CD4-positive, alpha-beta memory T cell (primary cell): ENCODE measurements at regions of chr9 and their contacts with region 1.

Region 1: GRCh38 chr9:131407717-131408195 is 13.9 kb downstream of the PRRC2B start:
- DNase-seq: peak; percentile 54 to 68 (median 59)
- H3K4me3 ChIP-seq: peak overlapping the region in 1 of 2 donors; percentile 6
- H3K4me3 Mint-ChIP-seq: peak overlapping the region; percentile 72 to 89 (median 82)
- H3K27ac ChIP-seq: peak overlapping the region; percentile 46
- H3K27ac Mint-ChIP-seq: peak overlapping the region; percentile 62 to 92 (median 88)
- H3K4me1 ChIP-seq: peaks cover 95% of the 10 kb centered on the region
- H3K4me1 Mint-ChIP-seq: peaks cover 70 to 92% (median 80%) of the 10 kb centered on the region in 4 donors
- H3K27me3 ChIP-seq: no peaks in the 10 kb centered on the region
- H3K27me3 Mint-ChIP-seq: no peaks in the 10 kb centered on the region

Region 2: GRCh38 chr9:131277910-131278701 is 129.7 kb before region 1 on chr9:
- CTCF ChIA-PET with region 1: no interaction called
- POLR2A ChIA-PET with region 1: no interaction called
- intact Hi-C with region 1: no loop called
- DNase-seq: peak; percentile 60 to 78 (median 61)
- H3K4me3 ChIP-seq: peak overlapping the region; percentile 21 to 65
- H3K4me3 Mint-ChIP-seq: peak overlapping the region; percentile 84 to 93 (median 91)
- H3K27ac ChIP-seq: peak overlapping the region; percentile 79
- H3K27ac Mint-ChIP-seq: peak overlapping the region; percentile 92 to 95 (median 94)
- H3K4me1 ChIP-seq: peaks cover 27% of the 10 kb centered on the region
- H3K4me1 Mint-ChIP-seq: peaks cover 22 to 49% (median 25%) of the 10 kb centered on the region in 4 donors
- H3K27me3 ChIP-seq: no peaks in the 10 kb centered on the region
- H3K27me3 Mint-ChIP-seq: peaks cover 2 to 3% of the 10 kb centered on the region in 2 donors

Region 3: GRCh38 chr9:131366761-131367401 is 40.9 kb before region 1 on chr9:
- CTCF ChIA-PET with region 1: interaction called, 10 read pairs
- POLR2A ChIA-PET with region 1: interaction called, 44 read pairs
- intact Hi-C with region 1: no loop called
- DNase-seq: no peak
- H3K4me3 ChIP-seq: no peak overlapping the region
- H3K4me3 Mint-ChIP-seq: no peak overlapping the region
- H3K27ac ChIP-seq: no peak overlapping the region
- H3K27ac Mint-ChIP-seq: no peak overlapping the region
- H3K4me1 ChIP-seq: peaks cover 1% of the 10 kb centered on the region
- H3K4me1 Mint-ChIP-seq: peaks cover 2 to 5% (median 3%) of the 10 kb centered on the region in 4 donors
- H3K27me3 ChIP-seq: no peaks in the 10 kb centered on the region
- H3K27me3 Mint-ChIP-seq: no peaks in the 10 kb centered on the region

Region 4: DNA sequence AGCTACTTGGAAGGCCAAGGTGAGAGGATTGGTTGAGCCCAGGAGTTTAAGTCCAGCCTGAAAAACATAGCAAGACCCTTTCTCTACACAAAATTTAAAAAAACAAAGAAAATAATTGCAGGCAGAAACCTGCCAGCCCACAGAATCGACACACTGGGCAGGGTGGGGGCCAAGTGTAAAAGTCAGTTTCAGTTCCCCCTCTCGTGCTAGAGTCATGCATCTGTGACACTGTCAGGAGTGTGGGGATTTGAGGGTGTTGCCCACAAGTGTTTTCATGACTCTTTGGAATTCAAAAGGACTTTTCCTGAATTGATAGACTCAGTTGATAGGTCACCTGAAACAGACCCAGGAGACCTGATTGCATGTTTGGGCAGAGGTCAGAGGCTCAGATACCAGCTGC is 33.7 kb after region 1 on chr9:
- CTCF ChIA-PET with region 1: no interaction called
- POLR2A ChIA-PET with region 1: no interaction called
- intact Hi-C with region 1: no loop called
- DNase-seq: no peak
- H3K4me3 ChIP-seq: no peak overlapping the region
- H3K4me3 Mint-ChIP-seq: no peak overlapping the region
- H3K27ac ChIP-seq: no peak overlapping the region
- H3K27ac Mint-ChIP-seq: peak overlapping the region in 5 of 7 donors; percentile 37 to 68 (median 52)
- H3K4me1 ChIP-seq: no peaks in the 10 kb centered on the region
- H3K4me1 Mint-ChIP-seq: peaks cover 0 to 17% (median 5%) of the 10 kb centered on the region in 4 donors
- H3K27me3 ChIP-seq: no peaks in the 10 kb centered on the region
- H3K27me3 Mint-ChIP-seq: no peaks in the 10 kb centered on the region

Region 5: DNA sequence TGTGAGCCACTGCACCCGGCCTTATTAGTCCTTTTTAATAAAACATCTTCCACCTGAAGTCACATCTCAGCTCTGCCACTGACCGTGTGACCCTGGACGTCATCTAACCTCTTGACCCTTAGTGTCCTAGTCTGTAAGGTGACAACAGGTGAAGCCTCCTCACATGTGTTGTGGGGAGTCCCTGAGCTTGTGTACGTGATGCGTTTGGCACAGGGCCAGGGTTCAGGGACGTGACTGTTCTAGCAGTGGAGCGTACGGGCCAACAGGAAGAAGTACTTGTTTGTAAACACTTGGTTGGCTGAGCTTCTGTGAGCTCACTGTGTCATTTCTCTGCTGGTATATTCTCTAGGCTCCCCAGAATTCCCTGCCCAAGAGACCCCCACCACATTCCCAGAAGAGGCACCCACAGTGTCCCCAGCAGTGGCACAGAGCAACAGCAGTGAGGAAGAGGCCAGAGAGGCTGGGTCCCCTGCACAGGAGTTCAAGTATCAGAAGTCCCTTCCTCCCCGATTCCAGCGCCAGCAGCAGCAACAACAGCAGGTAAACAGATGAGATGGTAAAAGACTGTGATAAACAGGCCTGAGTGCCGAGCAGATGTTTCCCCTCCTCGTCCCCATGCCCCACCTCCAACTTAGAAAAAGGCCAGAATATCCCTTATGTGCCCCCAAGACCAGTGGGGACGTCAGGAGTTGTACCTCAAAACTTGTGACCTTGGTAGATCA is 59.6 kb after region 1 on chr9:
- CTCF ChIA-PET with region 1: no interaction called
- POLR2A ChIA-PET with region 1: no interaction called
- intact Hi-C with region 1: no loop called
- DNase-seq: no peak
- H3K4me3 ChIP-seq: no peak overlapping the region
- H3K4me3 Mint-ChIP-seq: no peak overlapping the region
- H3K27ac ChIP-seq: no peak overlapping the region
- H3K27ac Mint-ChIP-seq: peak overlapping the region in 4 of 7 donors; percentile 8 to 68 (median 38)
- H3K4me1 ChIP-seq: no peaks in the 10 kb centered on the region
- H3K4me1 Mint-ChIP-seq: peaks cover 0 to 10% (median 4%) of the 10 kb centered on the region in 4 donors
- H3K27me3 ChIP-seq: no peaks in the 10 kb centered on the region
- H3K27me3 Mint-ChIP-seq: no peaks in the 10 kb centered on the region

Region 6: DNA sequence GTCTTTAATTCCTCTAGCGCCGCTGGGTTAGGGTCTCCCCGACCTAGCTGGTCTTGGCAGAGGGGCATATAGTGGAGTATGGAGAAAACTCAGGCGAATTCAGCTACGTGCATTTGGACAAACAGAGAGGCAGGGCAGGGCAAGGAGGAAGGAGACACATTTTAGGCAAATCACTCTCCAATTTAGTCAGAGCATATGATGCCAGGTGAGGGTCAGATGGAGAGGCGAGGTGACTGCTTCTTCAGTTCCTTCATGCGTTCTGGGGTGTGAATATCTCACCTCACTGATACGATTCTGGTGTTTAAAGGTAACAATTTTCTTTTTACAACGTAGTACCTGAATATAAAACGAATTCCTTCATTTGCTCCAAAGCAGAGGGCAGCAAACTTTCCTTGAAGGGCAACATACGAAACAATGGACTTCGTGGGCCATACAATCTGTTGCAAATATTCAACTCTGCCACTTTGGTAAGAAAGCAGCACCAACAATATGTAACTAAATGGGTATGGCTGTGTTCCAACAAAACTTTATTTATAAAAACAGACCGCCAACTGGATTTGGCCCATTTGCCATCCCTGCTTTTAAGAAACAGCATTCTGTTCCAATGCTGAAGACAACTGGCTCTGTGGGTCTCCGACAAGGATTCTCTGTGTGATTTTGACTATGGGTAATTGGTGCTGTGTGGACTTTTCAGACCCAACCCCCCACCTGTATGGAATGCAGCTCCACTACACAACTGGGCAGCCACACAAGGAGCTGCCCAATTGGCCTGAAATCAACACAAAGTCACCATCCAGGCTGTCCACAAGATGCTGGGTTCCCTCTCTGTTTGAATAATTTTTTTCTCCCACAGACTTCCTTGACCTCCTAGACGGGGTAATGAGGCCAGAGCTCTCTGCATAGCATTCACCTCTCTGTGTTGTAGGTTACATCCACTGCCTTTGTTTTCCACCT is 278.3 kb after region 1 on chr9:
- CTCF ChIA-PET with region 1: no interaction called
- POLR2A ChIA-PET with region 1: no interaction called
- intact Hi-C with region 1: no loop called
- DNase-seq: no peak
- H3K4me3 ChIP-seq: no peak overlapping the region
- H3K4me3 Mint-ChIP-seq: peak overlapping the region in 3 of 8 donors; percentile 26 to 62 (median 44)
- H3K27ac ChIP-seq: no peak overlapping the region
- H3K27ac Mint-ChIP-seq: peak overlapping the region; percentile 45 to 87 (median 80)
- H3K4me1 ChIP-seq: peaks cover 46% of the 10 kb centered on the region
- H3K4me1 Mint-ChIP-seq: peaks cover 51 to 95% (median 79%) of the 10 kb centered on the region in 4 donors
- H3K27me3 ChIP-seq: no peaks in the 10 kb centered on the region
- H3K27me3 Mint-ChIP-seq: no peaks in the 10 kb centered on the region